GM12878 (cell line): ENCODE measurements at regions of chr10 and their contacts with region 1.

Region 1: GRCh38 chr10:34290412-34291081 is 524.5 kb downstream of the PARD3 start:
- DNase-seq: no peak
- ATAC-seq: no peak
- H3K4me3 ChIP-seq: no peak overlapping the region
- H3K27ac ChIP-seq: no peak overlapping the region
- H3K4me1 ChIP-seq: no peaks in the 10 kb centered on the region
- H3K27me3 ChIP-seq: no peaks in the 10 kb centered on the region
- CTCF ChIP-seq: no peak
- EP300 ChIP-seq: no peak
- POLR2A ChIP-seq: no peak
- RAD21 ChIP-seq: no peak

Region 2: DNA sequence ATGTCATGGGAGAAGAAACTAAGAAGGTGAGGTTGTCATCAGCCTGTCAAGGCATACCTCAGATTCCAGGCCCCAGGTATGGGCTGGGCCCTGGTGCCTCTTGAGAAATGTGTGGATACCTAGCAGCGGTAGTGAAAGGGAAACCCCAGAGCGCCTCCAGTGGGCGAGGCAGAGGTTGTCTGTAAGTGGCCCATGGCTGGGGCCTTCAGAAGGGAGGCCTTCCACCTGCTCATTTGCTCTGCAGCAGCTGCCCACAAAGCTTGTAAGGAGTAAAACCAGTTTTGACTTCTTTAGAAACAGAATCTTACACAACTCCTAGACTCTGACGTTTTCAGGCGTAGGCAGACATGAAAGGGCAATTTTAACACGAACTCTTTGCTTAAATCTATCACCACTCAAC is 14.6 kb after region 1 on chr10:
- CTCF ChIA-PET with region 1: interaction called, 6 read pairs
- POLR2A ChIA-PET with region 1: interaction called, 3 read pairs
- RAD21 ChIA-PET with region 1: interaction called, 9 read pairs
- SMC1A ChIA-PET with region 1: interaction called, 11 read pairs
- in situ Hi-C with region 1: no loop called
- intact Hi-C with region 1: no loop called
- DNase-seq: no peak
- ATAC-seq: peak; percentile 95
- H3K4me3 ChIP-seq: no peak overlapping the region
- H3K27ac ChIP-seq: no peak overlapping the region
- H3K4me1 ChIP-seq: no peaks in the 10 kb centered on the region
- H3K27me3 ChIP-seq: no peaks in the 10 kb centered on the region
- CTCF ChIP-seq: peak; percentile 12 to 47 (median 32); a peak in 3 of 6 replicates
- EP300 ChIP-seq: no peak
- POLR2A ChIP-seq: no peak
- RAD21 ChIP-seq: peak; percentile 20; the same call in 1 of the 2 replicates

Region 3: DNA sequence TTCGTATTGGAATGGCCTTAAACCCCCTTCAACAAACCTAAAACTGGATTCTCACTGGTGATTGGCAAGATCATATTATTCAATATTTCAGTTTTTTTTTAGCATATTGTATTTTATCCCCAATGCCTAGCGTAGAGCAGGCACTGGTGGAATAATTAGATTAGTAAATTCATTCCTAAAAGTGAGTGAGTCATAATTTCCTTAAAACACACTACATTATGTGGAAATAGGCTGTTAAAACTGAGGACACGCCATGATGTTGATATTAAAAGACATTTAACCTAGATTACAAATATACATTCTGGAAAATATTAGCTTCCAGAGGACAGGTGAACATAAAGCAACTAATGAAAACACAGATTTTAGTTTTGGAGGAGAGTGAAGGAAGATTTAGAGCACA is 60.6 kb after region 1 on chr10:
- CTCF ChIA-PET with region 1: no interaction called
- POLR2A ChIA-PET with region 1: no interaction called
- RAD21 ChIA-PET with region 1: no interaction called
- SMC1A ChIA-PET with region 1: no interaction called
- in situ Hi-C with region 1: no loop called
- intact Hi-C with region 1: no loop called
- DNase-seq: no peak
- ATAC-seq: no peak
- H3K4me3 ChIP-seq: no peak overlapping the region
- H3K27ac ChIP-seq: no peak overlapping the region
- H3K4me1 ChIP-seq: no peaks in the 10 kb centered on the region
- H3K27me3 ChIP-seq: no peaks in the 10 kb centered on the region
- CTCF ChIP-seq: no peak
- EP300 ChIP-seq: no peak
- POLR2A ChIP-seq: no peak
- RAD21 ChIP-seq: no peak